ENCODE measurements at regions of chr1 and their contacts with region 1.

Region 1: DNA sequence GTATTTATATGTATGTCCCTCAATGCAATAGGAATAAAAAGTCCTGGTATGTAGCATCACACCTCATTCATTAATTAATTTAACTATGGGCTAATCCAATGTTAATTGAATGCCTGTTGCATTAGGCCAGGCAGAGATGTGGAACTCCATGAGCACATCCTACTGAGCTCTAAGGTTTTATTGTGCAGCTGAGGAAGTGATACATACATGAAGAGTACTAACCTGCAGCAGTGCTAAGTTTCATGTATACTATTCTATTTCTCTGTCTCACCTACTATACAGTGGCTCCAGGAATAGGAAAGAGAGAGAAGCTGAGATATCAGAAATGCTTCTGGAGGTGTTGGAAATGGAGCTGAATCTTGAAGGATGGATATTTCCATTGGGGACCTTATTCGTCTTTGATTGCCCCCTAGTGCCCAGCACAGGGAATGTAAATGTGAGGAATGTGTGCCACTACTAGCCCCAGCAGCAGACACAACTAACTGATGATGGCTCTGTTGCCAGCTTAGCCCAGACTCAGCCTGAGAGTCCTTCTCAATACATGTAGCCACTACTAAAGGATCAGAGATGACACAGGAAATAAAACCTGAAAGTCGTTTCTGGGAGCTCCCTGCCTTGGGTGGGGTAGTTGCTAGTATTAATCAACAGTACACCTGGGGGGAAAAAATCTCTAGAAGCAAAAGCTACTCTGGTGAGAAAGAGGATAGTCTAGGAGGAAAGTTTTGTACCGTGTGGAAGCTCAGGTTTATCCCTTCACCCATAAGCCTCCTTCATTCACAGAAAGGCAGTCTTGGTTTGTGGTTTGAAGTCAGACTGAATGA is 173.3 kb upstream of the FOXD3 start:
- DNase-seq: no peak
- H3K4me3 ChIP-seq: no peak overlapping the region
- CTCF ChIP-seq: peak; percentile 74

Region 2: DNA sequence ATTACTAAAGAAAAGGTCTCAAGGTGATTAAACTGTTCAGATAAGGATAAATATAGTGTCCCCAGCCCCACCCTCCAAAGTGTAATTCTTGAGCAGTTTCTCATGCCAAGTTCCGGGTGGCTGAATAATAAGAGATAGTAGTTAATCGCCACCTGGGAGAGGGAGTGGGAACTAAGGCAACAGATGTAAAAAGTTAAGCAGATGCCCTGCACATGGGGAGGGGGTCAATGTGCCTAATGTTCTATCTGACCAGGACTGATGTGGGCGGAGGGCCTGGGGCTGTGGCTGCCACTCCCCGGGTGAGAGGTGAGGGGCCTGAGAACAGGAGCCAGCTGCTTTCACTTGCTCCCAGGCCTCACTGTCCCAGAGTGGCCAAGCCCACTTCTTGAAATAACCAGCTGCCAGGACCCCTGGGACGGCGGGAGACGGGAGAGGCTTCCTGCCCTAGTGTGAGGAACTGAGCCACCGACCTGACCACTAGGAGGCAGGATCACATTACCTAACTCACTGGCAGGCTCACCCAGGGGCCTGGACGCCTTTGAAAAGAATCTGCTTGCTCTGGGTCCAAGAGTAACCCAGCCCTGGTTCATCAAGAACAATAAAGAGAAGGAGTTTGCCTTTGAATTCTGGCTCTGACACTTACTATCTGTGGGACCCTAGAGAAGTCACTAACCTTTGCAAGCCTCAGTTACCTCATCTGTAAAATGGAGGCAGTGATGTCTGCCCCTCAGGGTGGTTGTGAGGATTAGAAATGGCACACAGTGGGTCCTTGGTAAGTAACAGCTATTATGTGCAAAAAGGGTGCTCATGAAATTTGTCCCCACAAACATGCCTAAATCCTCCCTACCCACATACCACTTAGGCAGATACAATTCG is 185.9 kb before region 1 on chr1:
- CTCF ChIA-PET with region 1: interaction called, 47 read pairs
- POLR2A ChIA-PET with region 1: no interaction called
- DNase-seq: no peak
- H3K4me3 ChIP-seq: no peak overlapping the region
- CTCF ChIP-seq: peak; percentile 53